Dendritic cell treated with granulocyte-macrophage colony-stimulating factor and Interleukin-4, amounts not matched to agents 40 ng/mL and 50 ng/mL, for 4 days (primary cell): ENCODE measurements at regions of chr7 and their contacts with region 1.

Region 1: DNA sequence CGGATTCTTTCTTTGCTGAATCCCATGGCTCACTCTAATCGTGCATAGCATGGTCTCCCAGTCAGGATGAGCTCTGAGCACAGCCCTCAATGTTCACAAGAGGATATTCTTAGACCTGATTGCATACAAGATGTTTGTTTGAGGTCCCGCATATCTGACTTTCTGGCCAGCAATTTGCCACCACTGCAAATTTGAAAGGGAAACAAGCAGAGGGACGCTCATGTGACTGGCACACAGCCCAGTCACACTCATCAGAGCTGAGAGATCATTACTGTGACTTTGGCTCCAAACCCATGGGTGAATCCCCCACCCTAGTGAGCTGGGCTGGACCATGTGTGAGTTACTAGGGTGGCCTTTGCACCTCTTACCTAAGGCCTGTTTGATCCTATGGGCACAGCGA is 9.9 kb downstream of the TAS2R41 start:
- H3K4me3 Mint-ChIP-seq: no peak overlapping the region
- H3K27ac Mint-ChIP-seq: peak overlapping the region; percentile 83
- H3K4me1 Mint-ChIP-seq: peaks cover 66% of the 10 kb centered on the region
- H3K27me3 Mint-ChIP-seq: no peaks in the 10 kb centered on the region

Region 2: GRCh38 chr7:143229054-143229790 is 258.3 kb before region 1 on chr7:
- intact Hi-C with region 1: no loop called
- H3K4me3 Mint-ChIP-seq: no peak overlapping the region
- H3K27ac Mint-ChIP-seq: no peak overlapping the region
- H3K4me1 Mint-ChIP-seq: peaks cover 17% of the 10 kb centered on the region
- H3K27me3 Mint-ChIP-seq: no peaks in the 10 kb centered on the region

Region 3: DNA sequence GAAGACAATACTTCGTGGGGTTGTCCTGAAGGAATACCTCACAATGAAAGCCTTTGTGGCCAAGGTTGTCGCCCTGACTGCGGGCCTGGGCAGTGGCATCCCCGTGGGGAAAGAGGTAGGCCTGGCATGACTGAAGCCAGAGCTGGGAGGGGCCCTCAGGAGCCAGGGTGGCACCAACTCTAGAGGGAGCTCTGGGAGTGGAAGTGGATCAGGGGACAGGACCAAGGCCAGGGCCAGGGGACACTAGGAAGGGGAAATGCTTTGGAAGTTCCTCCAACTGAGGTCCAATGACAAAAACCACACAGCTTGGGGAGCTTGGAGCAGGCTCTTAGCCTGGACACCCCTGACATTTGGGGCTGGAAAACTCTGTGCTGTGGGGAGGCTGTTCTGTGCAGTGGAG is 165.8 kb before region 1 on chr7:
- intact Hi-C with region 1: loop called (anchors 10 kb)
- H3K4me3 Mint-ChIP-seq: no peak overlapping the region
- H3K27ac Mint-ChIP-seq: peak overlapping the region; percentile 66
- H3K4me1 Mint-ChIP-seq: peaks cover 88% of the 10 kb centered on the region
- H3K27me3 Mint-ChIP-seq: no peaks in the 10 kb centered on the region